CD4-positive, alpha-beta memory T cell (primary cell): ENCODE measurements at regions of chr12 and their contacts with region 1.

Region 1: GRCh38 chr12:115916910-115917668 is 360.4 kb downstream of the MED13L start:
- DNase-seq: peak; percentile 54 to 67 (median 64)
- H3K4me3 ChIP-seq: no peak overlapping the region
- H3K4me3 Mint-ChIP-seq: peak overlapping the region in 7 of 8 donors; percentile 8 to 49 (median 27)
- H3K27ac ChIP-seq: no peak overlapping the region
- H3K27ac Mint-ChIP-seq: peak overlapping the region in 1 of 7 donors; percentile 30
- H3K4me1 ChIP-seq: no peaks in the 10 kb centered on the region
- H3K4me1 Mint-ChIP-seq: peaks cover 0 to 4% (median 0%) of the 10 kb centered on the region in 4 donors
- H3K27me3 ChIP-seq: peaks cover 12% of the 10 kb centered on the region
- H3K27me3 Mint-ChIP-seq: peaks cover 21 to 42% of the 10 kb centered on the region in 2 donors

Region 2: GRCh38 chr12:113980537-113981337 is 1936.4 kb before region 1 on chr12:
- CTCF ChIA-PET with region 1: interaction called, 12 read pairs
- POLR2A ChIA-PET with region 1: no interaction called
- intact Hi-C with region 1: no loop called
- DNase-seq: peak in 3 of 5 donors; percentile 10 to 15 (median 12)
- H3K4me3 ChIP-seq: no peak overlapping the region
- H3K4me3 Mint-ChIP-seq: no peak overlapping the region
- H3K27ac ChIP-seq: no peak overlapping the region
- H3K27ac Mint-ChIP-seq: no peak overlapping the region
- H3K4me1 ChIP-seq: no peaks in the 10 kb centered on the region
- H3K4me1 Mint-ChIP-seq: no peaks in the 10 kb centered on the region
- H3K27me3 ChIP-seq: no peaks in the 10 kb centered on the region
- H3K27me3 Mint-ChIP-seq: peaks cover 23 to 34% of the 10 kb centered on the region in 2 donors

Region 3: GRCh38 chr12:114662512-114663177 is 1254.4 kb before region 1 on chr12:
- CTCF ChIA-PET with region 1: interaction called, 39 read pairs
- POLR2A ChIA-PET with region 1: no interaction called
- intact Hi-C with region 1: no loop called
- DNase-seq: peak in 4 of 5 donors; percentile 29 to 46 (median 38)
- H3K4me3 ChIP-seq: no peak overlapping the region
- H3K4me3 Mint-ChIP-seq: no peak overlapping the region
- H3K27ac ChIP-seq: no peak overlapping the region
- H3K27ac Mint-ChIP-seq: no peak overlapping the region
- H3K4me1 ChIP-seq: no peaks in the 10 kb centered on the region
- H3K4me1 Mint-ChIP-seq: peaks cover 0 to 6% (median 2%) of the 10 kb centered on the region in 4 donors
- H3K27me3 ChIP-seq: peaks cover 11% of the 10 kb centered on the region
- H3K27me3 Mint-ChIP-seq: peaks cover 24 to 35% of the 10 kb centered on the region in 2 donors

Region 4: GRCh38 chr12:115960868-115961802 is 44.0 kb after region 1 on chr12:
- CTCF ChIA-PET with region 1: no interaction called
- POLR2A ChIA-PET with region 1: no interaction called
- intact Hi-C with region 1: no loop called
- DNase-seq: no peak
- H3K4me3 ChIP-seq: no peak overlapping the region
- H3K4me3 Mint-ChIP-seq: no peak overlapping the region
- H3K27ac ChIP-seq: no peak overlapping the region
- H3K27ac Mint-ChIP-seq: peak overlapping the region in 3 of 7 donors; percentile 3 to 22 (median 14)
- H3K4me1 ChIP-seq: no peaks in the 10 kb centered on the region
- H3K4me1 Mint-ChIP-seq: peaks cover 0 to 4% (median 2%) of the 10 kb centered on the region in 4 donors
- H3K27me3 ChIP-seq: no peaks in the 10 kb centered on the region
- H3K27me3 Mint-ChIP-seq: no peaks in the 10 kb centered on the region